Mammary epithelial cell (primary cell): ENCODE measurements at regions of chr16 and their contacts with region 1.

Region 1: GRCh38 chr16:21060027-21060510 is 90.6 kb downstream of the DNAH3 start:
- DNase-seq: no peak
- H3K4me3 ChIP-seq: no peak overlapping the region
- H3K27ac ChIP-seq: no peak overlapping the region
- H3K4me1 ChIP-seq: no peaks in the 10 kb centered on the region
- H3K27me3 ChIP-seq: no peaks in the 10 kb centered on the region
- CTCF ChIP-seq: no peak

Region 2: DNA sequence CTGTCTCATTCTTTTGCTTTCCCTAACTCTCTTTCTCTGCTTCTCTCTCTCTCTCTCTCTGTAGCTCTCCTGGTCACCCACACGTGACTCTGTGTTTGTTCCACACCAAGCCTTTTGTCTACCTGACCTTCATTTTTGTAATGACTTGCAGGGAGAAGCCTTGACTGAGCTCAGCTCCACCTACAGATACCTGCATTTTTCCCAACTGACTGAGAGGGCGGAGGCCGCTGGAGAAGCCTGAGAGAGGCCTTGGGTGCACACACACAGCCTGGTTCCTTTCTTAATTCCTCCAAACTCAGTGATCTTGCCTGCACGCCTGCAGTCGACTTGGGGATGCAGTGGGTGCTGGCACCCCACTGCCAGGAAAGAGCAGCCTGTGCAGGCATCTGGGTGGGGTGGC is 90.7 kb before region 1 on chr16:
- CTCF ChIA-PET with region 1: no interaction called
- dilution Hi-C with region 1: loop called (anchors 10 kb)
- in situ Hi-C with region 1: no loop called
- intact Hi-C with region 1: no loop called
- DNase-seq: peak; percentile 62
- H3K4me3 ChIP-seq: no peak overlapping the region
- H3K27ac ChIP-seq: no peak overlapping the region
- H3K4me1 ChIP-seq: no peaks in the 10 kb centered on the region
- H3K27me3 ChIP-seq: no peaks in the 10 kb centered on the region
- CTCF ChIP-seq: no peak